ENCODE measurements at regions of chr9 and their contacts with region 1.

Region 1: DNA sequence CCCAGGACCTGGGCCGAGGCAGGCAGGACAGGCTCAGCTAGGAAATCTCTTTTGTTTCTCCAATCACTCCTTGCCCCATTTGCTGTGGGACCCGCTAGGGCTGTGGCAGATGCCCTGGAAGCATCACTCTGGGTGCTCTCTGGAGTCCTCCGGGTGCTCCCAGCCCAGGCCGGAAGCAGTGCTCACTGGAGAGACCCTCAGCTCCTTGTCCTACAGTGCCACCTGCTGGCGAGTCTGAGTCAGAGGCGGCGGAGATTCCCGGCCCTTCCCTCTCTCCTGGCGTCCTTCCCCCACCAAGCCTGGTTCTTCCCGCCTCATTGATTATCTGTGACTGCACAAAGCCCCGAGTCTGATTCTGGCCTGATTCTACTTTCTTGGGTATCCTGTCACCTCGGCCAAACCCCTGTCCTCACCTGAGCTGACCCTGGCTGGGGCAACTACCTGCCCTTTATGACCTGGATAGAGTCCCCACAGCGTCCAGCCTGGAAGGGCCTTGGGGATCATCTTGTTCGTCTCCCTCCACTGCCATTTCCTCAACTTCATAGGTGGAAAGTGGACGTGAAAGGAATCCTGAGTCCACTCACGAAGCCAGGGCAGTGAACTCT is 7.3 kb upstream of the BARHL1 start:
- DNase-seq: no peak
- ATAC-seq: peak; percentile 83
- H3K4me3 ChIP-seq: no peak overlapping the region
- H3K27ac ChIP-seq: no peak overlapping the region
- H3K4me1 ChIP-seq: no peaks in the 10 kb centered on the region
- H3K27me3 ChIP-seq: peaks cover 5 to 6% of the 10 kb centered on the region in 2 experiments
- CTCF ChIP-seq: peak; percentile 62 to 75 (median 70); a peak in 5 of 6 replicates
- EP300 ChIP-seq: no peak
- POLR2A ChIP-seq: no peak
- RAD21 ChIP-seq: peak; percentile 80

Region 2: GRCh38 chr9:132412089-132412488 is 163.0 kb before region 1 on chr9:
- CTCF ChIA-PET with region 1: interaction called, 39 read pairs
- POLR2A ChIA-PET with region 1: no interaction called
- RAD21 ChIA-PET with region 1: no interaction called
- SMC1A ChIA-PET with region 1: no interaction called
- in situ Hi-C with region 1: loop called (anchors 5 kb)
- intact Hi-C with region 1: loop called (anchors 1 kb)
- DNase-seq: no peak
- ATAC-seq: peak; percentile 59
- H3K4me3 ChIP-seq: no peak overlapping the region
- H3K27ac ChIP-seq: no peak overlapping the region
- H3K4me1 ChIP-seq: peaks cover 10% of the 10 kb centered on the region
- H3K27me3 ChIP-seq: peaks cover 0 to 24% of the 10 kb centered on the region in 2 experiments; a peak in 2 of 4 replicates
- CTCF ChIP-seq: peak; percentile 38 to 62 (median 43); a peak in 5 of 6 replicates
- EP300 ChIP-seq: no peak
- POLR2A ChIP-seq: no peak
- RAD21 ChIP-seq: peak; percentile 35

Region 3: GRCh38 chr9:132507746-132508469 is 67.2 kb before region 1 on chr9:
- CTCF ChIA-PET with region 1: interaction called, 4 read pairs
- POLR2A ChIA-PET with region 1: no interaction called
- RAD21 ChIA-PET with region 1: no interaction called
- SMC1A ChIA-PET with region 1: no interaction called
- in situ Hi-C with region 1: no loop called
- intact Hi-C with region 1: loop called (anchors 2 kb)
- DNase-seq: no peak
- ATAC-seq: peak; percentile 92
- H3K4me3 ChIP-seq: no peak overlapping the region
- H3K27ac ChIP-seq: no peak overlapping the region
- H3K4me1 ChIP-seq: no peaks in the 10 kb centered on the region
- H3K27me3 ChIP-seq: peaks cover 0 to 3% of the 10 kb centered on the region in 2 experiments; a peak in 2 of 4 replicates
- CTCF ChIP-seq: peak; percentile 74 to 83 (median 77)
- EP300 ChIP-seq: no peak
- POLR2A ChIP-seq: no peak
- RAD21 ChIP-seq: peak; percentile 76

Region 4: DNA sequence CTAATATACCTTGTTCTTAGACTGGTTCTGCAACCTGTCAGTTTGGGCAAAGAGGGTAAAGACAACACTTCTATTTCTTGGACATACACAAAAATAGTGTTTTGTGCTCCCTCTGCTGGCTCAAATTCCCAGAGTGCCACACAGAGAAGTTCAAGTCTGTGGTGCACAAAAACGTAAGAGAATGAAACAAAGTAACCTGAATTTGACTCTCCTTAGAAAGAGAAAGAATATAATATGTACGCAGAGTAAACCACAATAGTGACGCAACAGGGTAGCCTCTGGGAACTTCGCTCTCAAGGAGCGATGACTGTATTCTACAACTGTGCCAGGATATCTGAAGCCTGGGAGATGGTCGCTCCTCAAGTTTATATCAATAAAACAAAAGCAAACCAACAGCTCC is 76.1 kb after region 1 on chr9:
- CTCF ChIA-PET with region 1: no interaction called
- POLR2A ChIA-PET with region 1: no interaction called
- RAD21 ChIA-PET with region 1: no interaction called
- SMC1A ChIA-PET with region 1: no interaction called
- in situ Hi-C with region 1: no loop called
- intact Hi-C with region 1: no loop called
- DNase-seq: no peak
- ATAC-seq: no peak
- H3K4me3 ChIP-seq: no peak overlapping the region
- H3K27ac ChIP-seq: no peak overlapping the region
- H3K4me1 ChIP-seq: no peaks in the 10 kb centered on the region
- H3K27me3 ChIP-seq: no peaks in the 10 kb centered on the region
- CTCF ChIP-seq: peak; percentile 18 to 24 (median 21); a peak in 2 of 6 replicates
- EP300 ChIP-seq: no peak
- POLR2A ChIP-seq: no peak
- RAD21 ChIP-seq: no peak